ENCODE measurements at regions of chr21 and their contacts with region 1.

Region 1: DNA sequence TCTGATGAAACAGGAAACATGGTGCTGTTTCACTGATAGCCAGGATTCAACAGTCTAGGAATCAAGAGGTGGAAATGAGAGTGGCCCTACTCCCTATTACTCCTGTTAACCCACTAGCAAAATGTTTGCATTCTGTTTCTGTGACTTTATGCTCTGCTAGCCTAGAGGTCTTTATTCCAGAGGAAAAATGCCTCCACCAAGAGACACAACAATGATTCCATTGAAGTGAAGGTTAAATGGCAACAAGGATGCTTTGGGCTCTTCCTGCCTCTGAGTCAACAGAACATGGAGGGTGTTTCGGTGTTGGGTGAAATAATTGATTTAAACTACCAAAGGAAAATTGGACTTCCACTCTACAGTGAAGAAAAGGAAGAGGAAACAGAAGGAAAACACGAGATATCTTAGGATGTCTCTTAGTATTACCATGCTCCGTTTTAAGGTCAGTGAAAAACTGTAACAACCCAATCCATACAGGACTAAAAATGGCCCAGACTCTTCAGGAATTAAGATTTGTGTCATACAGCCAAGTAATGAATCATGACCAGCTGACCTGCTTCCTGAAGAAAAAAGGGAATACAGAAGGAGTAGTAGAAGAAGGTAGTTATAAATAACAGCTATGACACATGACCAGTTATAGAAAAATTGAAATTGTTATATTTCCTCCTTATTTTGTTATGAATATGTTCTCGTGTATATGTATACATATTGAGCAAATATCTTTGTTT is 1237.8 kb downstream of the NCAM2 start:
- DNase-seq: no peak
- H3K4me3 ChIP-seq: no peak overlapping the region
- H3K27ac ChIP-seq: no peak overlapping the region
- H3K4me1 ChIP-seq: peaks cover 13% of the 10 kb centered on the region
- H3K27me3 ChIP-seq: no peaks in the 10 kb centered on the region
- CTCF ChIP-seq: no peak

Region 2: DNA sequence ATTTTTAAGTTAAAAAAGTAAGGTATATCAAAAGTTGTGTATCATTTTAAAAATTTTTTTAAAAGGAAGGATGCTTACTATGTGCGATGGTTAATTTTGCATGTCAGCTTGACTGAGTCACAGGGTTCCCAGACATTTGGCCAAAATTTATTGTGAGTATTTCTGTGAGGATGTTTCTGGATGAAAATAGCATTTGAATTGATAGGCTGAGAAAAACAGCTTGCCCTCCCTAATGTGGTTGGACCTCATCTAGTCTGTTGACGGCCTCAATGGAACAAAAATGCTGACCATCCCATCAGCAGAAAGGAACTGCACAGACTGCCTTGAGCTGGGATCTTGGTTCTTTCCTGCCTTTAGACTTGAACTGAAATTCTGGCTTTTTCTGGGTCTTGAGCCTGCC is 513.3 kb before region 1 on chr21:
- CTCF ChIA-PET with region 1: no interaction called
- POLR2A ChIA-PET with region 1: no interaction called
- intact Hi-C with region 1: loop called (anchors 10 kb)
- DNase-seq: no peak
- H3K4me3 ChIP-seq: no peak overlapping the region
- H3K27ac ChIP-seq: no peak overlapping the region
- H3K4me1 ChIP-seq: no peaks in the 10 kb centered on the region
- H3K27me3 ChIP-seq: no peaks in the 10 kb centered on the region
- CTCF ChIP-seq: no peak

Region 3: DNA sequence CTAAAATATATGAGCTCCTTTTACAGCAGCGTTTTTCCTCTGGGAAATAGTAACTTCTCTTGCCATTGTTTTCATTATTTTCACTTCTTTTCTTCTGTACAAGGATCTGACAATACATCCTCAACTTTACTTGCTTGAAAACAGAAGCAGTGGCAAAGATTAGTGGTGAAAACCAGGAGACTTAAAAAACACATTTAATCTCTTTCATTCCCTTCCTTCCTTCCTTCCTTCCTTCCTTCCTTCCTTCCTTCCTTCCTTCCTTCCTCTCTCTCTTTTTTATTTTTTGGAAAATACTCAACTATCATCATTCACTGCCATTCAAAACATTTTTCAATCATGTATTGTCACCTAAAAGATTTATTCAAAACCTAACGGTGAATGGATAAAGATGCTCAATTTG is 173.5 kb after region 1 on chr21:
- CTCF ChIA-PET with region 1: no interaction called
- POLR2A ChIA-PET with region 1: interaction called, 3 read pairs
- intact Hi-C with region 1: loop called (anchors 1 kb)
- DNase-seq: peak; percentile 95
- H3K4me3 ChIP-seq: no peak overlapping the region
- H3K27ac ChIP-seq: peak overlapping the region; percentile 97
- H3K4me1 ChIP-seq: peaks cover 33% of the 10 kb centered on the region
- H3K27me3 ChIP-seq: no peaks in the 10 kb centered on the region
- CTCF ChIP-seq: no peak

Measured in A673 (cell line).